GM10248 (cell line): ENCODE measurements at regions of chr16 and their contacts with region 1.

Region 1: GRCh38 chr16:85114909-85115567 is 2.8 kb upstream of the CIBAR2 start:
- DNase-seq: peak; percentile 93
- CTCF ChIP-seq: peak; percentile 98

Region 2: GRCh38 chr16:85072947-85073346 is 42.1 kb before region 1 on chr16:
- CTCF ChIA-PET with region 1: no interaction called
- POLR2A ChIA-PET with region 1: no interaction called
- DNase-seq: no peak
- CTCF ChIP-seq: no peak

Region 3: GRCh38 chr16:85126705-85127419 is 11.8 kb after region 1 on chr16:
- CTCF ChIA-PET with region 1: interaction called, 32 read pairs
- POLR2A ChIA-PET with region 1: no interaction called
- DNase-seq: no peak
- CTCF ChIP-seq: no peak

Region 4: GRCh38 chr16:85157813-85158742 is 43.0 kb after region 1 on chr16:
- CTCF ChIA-PET with region 1: interaction called, 10 read pairs
- POLR2A ChIA-PET with region 1: no interaction called
- DNase-seq: no peak
- CTCF ChIP-seq: no peak

Region 5: DNA sequence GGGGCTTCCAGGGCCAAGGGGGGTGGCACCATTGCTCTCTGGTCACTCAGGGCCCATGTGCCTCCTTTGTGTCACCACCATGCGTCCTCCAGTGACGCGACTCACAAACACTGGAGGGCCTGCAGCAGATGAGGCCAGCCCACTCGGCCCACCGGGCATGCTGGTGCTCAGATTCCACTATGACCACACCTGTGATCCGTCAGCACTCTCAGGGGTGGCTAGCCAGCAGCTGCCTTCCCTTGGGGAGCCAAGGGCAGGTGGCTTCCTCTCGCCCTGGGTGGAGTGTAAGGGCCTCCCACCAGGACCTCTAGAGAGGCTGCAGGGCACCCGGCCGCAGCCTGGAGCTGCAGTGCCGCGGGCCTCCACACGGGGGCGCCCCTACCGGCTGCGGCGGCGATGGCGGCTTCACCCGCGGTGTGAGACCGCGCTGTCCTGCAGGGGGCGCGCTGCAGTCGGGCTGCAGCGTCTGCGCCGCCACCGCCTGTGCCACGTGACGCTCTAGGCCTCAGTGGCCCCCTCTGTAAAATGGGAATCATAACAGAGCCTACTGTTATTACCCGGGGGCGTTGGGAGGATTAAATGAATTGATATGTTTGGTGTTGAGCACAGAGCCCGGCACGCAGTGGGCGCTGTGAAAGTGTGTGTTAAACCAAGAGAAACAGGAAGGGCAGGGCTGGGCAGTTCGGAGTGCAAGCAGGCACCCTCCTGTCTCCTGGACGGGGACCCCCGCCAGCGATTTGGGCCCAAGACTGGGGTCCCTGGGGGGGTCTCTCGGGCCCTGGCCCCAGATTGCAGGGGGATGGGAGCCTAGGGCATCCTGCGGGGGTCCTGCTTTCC is 305.7 kb after region 1 on chr16:
- CTCF ChIA-PET with region 1: interaction called, 14 read pairs
- POLR2A ChIA-PET with region 1: no interaction called
- DNase-seq: peak; percentile 91
- CTCF ChIP-seq: peak; percentile 100